ENCODE measurements at regions of chr6 and their contacts with region 1.

Region 1: DNA sequence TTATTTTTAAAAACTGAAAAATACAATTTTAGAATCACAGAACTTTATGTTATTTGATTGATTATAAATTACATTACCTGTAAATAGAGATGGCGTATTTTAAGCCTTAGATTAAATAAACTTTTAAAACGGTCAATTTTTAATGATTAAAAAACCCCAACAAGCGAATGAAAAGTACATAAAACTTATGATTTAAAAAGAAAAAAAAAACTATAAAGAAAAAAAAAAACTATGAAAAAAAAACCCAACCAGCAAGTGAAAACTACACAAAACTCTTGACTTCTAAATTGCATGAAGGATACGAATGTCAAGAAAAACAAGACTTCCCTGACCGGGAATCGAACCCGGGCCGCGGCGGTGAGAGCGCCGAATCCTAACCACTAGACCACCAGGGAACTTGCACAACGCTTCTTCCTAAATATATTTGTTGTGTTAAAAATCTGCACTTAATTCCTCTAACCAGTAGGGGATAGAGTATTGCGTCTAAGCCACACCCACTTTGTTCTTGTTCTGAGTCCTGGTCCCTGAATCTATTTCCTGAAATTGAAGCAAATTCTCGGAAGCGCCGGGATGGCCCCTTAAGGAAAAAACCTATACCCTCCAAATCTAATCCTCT is 10.7 kb upstream of the NCOA7 start:
- H3K4me3 ChIP-seq: peak overlapping the region; percentile 85
- H3K27ac ChIP-seq: peak overlapping the region; percentile 83
- H3K4me1 ChIP-seq: no peaks in the 10 kb centered on the region
- CTCF ChIP-seq: peak; percentile 55; the same call in 1 of the 2 replicates

Region 2: DNA sequence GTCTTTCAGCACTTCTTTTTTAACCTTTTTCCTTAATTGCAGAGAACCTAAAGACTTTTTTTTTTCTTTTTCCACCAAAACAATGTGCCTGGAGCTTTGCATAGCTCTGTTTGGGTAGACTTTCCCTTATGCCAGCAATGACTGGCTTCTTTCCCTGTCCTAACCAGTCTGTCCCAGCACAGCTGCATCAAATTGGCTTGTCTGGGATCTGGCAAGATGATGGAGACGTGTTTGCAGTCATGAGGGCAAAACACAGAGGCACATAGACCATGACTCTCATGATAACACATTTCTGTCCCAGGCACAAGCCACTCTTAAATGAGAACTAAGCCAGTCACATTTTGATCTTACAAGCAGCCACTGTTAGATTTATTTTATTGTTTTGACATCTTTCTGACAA is 14.1 kb before region 1 on chr6:
- CTCF ChIA-PET with region 1: interaction called, 11 read pairs
- POLR2A ChIA-PET with region 1: no interaction called
- H3K4me3 ChIP-seq: no peak overlapping the region
- H3K27ac ChIP-seq: no peak overlapping the region
- H3K4me1 ChIP-seq: no peaks in the 10 kb centered on the region
- CTCF ChIP-seq: no peak

Region 3: GRCh38 chr6:125944434-125944816 is 164.4 kb after region 1 on chr6:
- CTCF ChIA-PET with region 1: interaction called, 11 read pairs
- POLR2A ChIA-PET with region 1: no interaction called
- H3K4me3 ChIP-seq: no peak overlapping the region
- H3K27ac ChIP-seq: no peak overlapping the region
- H3K4me1 ChIP-seq: peaks cover 10% of the 10 kb centered on the region
- CTCF ChIP-seq: no peak

Region 4: DNA sequence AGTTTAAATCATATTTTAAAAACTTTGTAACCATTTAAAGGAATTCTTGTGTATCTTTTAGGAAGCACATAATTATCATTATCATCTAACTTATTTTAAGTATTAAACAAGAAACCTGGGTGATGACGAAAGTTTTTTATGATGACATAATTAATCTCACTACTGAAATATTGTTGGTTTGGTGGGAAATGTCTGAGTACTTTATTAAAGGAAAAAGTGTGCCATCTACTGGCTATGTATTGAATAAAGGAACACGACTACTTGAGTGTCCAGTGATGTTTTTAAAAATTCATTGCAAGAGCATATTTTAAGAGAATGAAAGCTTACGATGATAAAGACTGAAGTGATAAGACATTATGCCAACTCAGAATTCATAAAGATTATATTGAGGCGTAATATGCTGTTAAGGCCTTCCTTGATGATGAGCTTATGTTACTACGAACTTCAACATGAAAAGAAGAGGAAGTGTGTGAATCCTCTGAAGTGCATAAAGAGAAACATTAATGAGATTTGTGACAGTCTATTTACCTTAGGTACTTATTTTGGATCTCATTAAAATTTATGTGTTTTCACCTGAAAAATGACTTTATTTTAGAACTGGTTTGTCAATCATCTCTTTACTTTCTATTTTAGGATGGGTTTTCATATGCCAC is 194.3 kb after region 1 on chr6:
- CTCF ChIA-PET with region 1: interaction called, 32 read pairs
- POLR2A ChIA-PET with region 1: interaction called, 3 read pairs
- H3K4me3 ChIP-seq: no peak overlapping the region
- H3K27ac ChIP-seq: no peak overlapping the region
- H3K4me1 ChIP-seq: no peaks in the 10 kb centered on the region
- CTCF ChIP-seq: no peak

Measured in HEK293 (cell line).